ENCODE measurements at regions of chr7 and their contacts with region 1.

Region 1: DNA sequence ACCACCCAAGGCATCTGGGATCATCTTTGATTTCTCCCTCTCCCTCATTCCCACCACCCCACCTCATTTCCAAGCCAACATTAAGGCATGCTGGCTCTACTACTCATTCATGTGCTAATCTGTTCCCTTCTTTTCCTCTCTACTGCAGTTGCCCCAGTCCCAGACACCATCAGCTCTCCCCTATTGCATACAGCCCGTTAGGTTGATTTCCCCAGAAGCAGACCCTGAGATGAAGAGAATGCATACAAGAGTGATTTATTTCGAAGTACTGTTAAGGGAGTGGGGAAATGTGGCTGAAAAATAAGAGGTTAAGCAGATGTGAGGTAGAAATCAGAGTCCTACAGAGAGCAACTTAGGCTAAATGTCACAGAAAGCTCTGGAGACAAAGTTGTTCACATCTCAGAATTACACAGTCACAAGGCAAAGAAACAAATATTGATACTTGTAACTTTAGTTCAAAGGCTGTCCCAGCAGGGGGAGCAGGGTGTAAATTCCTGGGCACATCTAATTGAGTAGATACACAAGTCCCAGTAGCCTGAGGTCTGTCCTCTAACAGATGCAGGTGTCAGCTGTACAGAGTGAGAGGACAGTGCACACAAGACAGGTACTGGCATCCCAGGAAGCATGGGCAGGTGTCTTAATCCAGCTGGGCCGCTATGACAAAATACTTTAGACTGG is 20.9 kb downstream of the AKR1D1 start:
- DNase-seq: peak; percentile 49
- ATAC-seq: 0 out of 2 replicates have a peak, but pooled peaks have one; percentile 29
- H3K4me3 ChIP-seq: no peak overlapping the region
- H3K27ac ChIP-seq: no peak overlapping the region
- H3K4me1 ChIP-seq: peaks cover 5% of the 10 kb centered on the region
- H3K27me3 ChIP-seq: no peaks in the 10 kb centered on the region
- CTCF ChIP-seq: peak; percentile 59

Region 2: DNA sequence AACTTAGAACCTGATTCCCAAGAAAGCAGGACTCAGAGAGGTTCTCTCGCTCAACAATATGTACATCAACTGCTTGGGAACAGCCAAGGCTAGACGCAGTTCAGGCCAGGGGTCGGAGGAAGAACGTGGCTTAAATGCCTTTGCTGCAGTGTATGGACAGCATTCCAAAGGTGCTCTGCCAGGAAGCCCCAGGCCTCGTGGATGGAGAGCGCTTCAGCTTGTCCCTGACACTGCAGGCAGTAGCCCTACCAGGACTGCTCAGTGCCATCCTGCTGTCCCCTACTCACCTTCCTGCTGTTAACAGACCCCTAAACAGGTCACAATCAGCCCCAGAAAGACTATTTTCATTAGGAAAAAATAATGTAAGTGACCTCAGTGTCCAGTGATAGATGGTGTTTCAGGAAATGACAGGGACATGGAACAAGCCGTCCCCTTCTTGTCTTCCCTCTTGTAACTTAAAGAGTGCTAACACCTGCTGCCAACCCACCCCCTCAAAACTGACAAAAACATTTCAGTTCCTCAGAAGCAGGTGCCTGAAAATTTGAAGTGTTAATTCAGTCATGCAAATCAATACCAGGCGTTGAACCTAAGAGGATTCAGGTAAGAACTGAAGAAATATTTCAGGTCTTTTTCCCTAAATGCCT is 111.8 kb before region 1 on chr7:
- CTCF ChIA-PET with region 1: no interaction called
- POLR2A ChIA-PET with region 1: no interaction called
- intact Hi-C with region 1: no loop called
- DNase-seq: no peak
- ATAC-seq: no peak
- H3K4me3 ChIP-seq: no peak overlapping the region
- H3K27ac ChIP-seq: no peak overlapping the region
- H3K4me1 ChIP-seq: peaks cover 17% of the 10 kb centered on the region
- H3K27me3 ChIP-seq: no peaks in the 10 kb centered on the region
- CTCF ChIP-seq: no peak

Region 3: GRCh38 chr7:138074121-138074520 is 23.1 kb before region 1 on chr7:
- CTCF ChIA-PET with region 1: no interaction called
- POLR2A ChIA-PET with region 1: no interaction called
- intact Hi-C with region 1: loop called (anchors 1 kb)
- DNase-seq: peak; percentile 87
- ATAC-seq: peak; percentile 64
- H3K4me3 ChIP-seq: no peak overlapping the region
- H3K27ac ChIP-seq: peak overlapping the region; percentile 87
- H3K4me1 ChIP-seq: peaks cover 40% of the 10 kb centered on the region
- H3K27me3 ChIP-seq: no peaks in the 10 kb centered on the region
- CTCF ChIP-seq: no peak

Region 4: GRCh38 chr7:138125119-138125518 is 27.9 kb after region 1 on chr7:
- CTCF ChIA-PET with region 1: no interaction called
- POLR2A ChIA-PET with region 1: interaction called, 11 read pairs
- intact Hi-C with region 1: no loop called
- DNase-seq: peak; percentile 48
- ATAC-seq: peak; percentile 46
- H3K4me3 ChIP-seq: no peak overlapping the region; the same call in 1 of the 2 replicates
- H3K27ac ChIP-seq: peak overlapping the region; percentile 86
- H3K4me1 ChIP-seq: peaks cover 25% of the 10 kb centered on the region
- H3K27me3 ChIP-seq: no peaks in the 10 kb centered on the region
- CTCF ChIP-seq: no peak

Region 5: GRCh38 chr7:138151731-138152577 is 54.8 kb after region 1 on chr7:
- CTCF ChIA-PET with region 1: no interaction called
- POLR2A ChIA-PET with region 1: no interaction called
- intact Hi-C with region 1: no loop called
- DNase-seq: peak; percentile 17
- ATAC-seq: no peak
- H3K4me3 ChIP-seq: no peak overlapping the region
- H3K27ac ChIP-seq: no peak overlapping the region
- H3K4me1 ChIP-seq: no peaks in the 10 kb centered on the region
- H3K27me3 ChIP-seq: no peaks in the 10 kb centered on the region
- CTCF ChIP-seq: no peak

Region 6: GRCh38 chr7:138243430-138243829 is 146.2 kb after region 1 on chr7:
- CTCF ChIA-PET with region 1: no interaction called
- POLR2A ChIA-PET with region 1: no interaction called
- intact Hi-C with region 1: no loop called
- DNase-seq: peak; percentile 35
- ATAC-seq: no peak
- H3K4me3 ChIP-seq: no peak overlapping the region
- H3K27ac ChIP-seq: no peak overlapping the region
- H3K4me1 ChIP-seq: no peaks in the 10 kb centered on the region
- H3K27me3 ChIP-seq: no peaks in the 10 kb centered on the region
- CTCF ChIP-seq: no peak

Region 7: GRCh38 chr7:138257459-138258196 is 160.4 kb after region 1 on chr7:
- CTCF ChIA-PET with region 1: no interaction called
- POLR2A ChIA-PET with region 1: no interaction called
- intact Hi-C with region 1: no loop called
- DNase-seq: peak; percentile 17
- ATAC-seq: no peak
- H3K4me3 ChIP-seq: no peak overlapping the region
- H3K27ac ChIP-seq: no peak overlapping the region
- H3K4me1 ChIP-seq: no peaks in the 10 kb centered on the region
- H3K27me3 ChIP-seq: no peaks in the 10 kb centered on the region
- CTCF ChIP-seq: no peak